Mammary epithelial cell (primary cell): ENCODE measurements at regions of chr16 and their contacts with region 1.

Region 1: GRCh38 chr16:81885976-81886586 is 107.0 kb downstream of the PLCG2 start:
- DNase-seq: no peak
- H3K4me3 ChIP-seq: no peak overlapping the region
- H3K27ac ChIP-seq: no peak overlapping the region
- H3K4me1 ChIP-seq: no peaks in the 10 kb centered on the region
- H3K27me3 ChIP-seq: no peaks in the 10 kb centered on the region
- CTCF ChIP-seq: peak; percentile 60 to 83

Region 2: DNA sequence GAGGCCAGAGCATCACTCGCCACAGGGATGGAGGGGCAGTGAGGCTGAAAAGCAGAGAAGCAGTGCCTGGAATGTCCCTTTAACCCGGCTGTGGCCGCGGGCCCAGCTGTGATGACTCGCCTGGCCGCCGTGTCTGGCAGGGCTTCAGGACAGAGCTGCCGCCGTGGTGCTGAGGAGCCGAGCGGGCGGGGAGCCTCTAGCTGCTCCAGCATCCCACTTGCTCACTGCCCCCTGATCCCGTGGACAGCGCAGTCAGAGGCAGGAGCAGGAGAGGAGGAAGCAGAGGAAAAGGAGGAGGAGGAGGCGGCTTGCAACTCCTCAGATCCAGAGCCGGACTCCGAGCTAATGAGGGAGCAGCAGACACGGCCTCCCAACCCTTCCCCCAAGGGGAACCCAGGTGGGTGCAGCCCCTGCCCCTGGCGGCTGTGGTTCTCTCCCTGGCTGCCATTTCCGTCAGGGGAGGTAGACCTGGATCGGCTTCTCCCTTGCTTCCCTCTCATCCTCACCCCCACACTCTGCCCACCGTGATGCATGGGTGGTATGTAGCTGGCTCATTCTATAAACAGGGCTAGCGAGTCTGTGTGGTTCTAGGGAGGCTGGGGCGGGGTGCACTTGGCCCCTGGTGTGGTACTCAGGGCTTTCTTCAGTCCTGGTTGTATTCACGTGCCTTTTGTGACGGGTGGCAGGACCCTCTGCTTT is 275.8 kb before region 1 on chr16:
- CTCF ChIA-PET with region 1: no interaction called
- dilution Hi-C with region 1: no loop called
- in situ Hi-C with region 1: no loop called
- intact Hi-C with region 1: no loop called
- DNase-seq: peak; percentile 52
- H3K4me3 ChIP-seq: no peak overlapping the region
- H3K27ac ChIP-seq: no peak overlapping the region
- H3K4me1 ChIP-seq: peaks cover 35% of the 10 kb centered on the region
- H3K27me3 ChIP-seq: no peaks in the 10 kb centered on the region
- CTCF ChIP-seq: no peak

Region 3: DNA sequence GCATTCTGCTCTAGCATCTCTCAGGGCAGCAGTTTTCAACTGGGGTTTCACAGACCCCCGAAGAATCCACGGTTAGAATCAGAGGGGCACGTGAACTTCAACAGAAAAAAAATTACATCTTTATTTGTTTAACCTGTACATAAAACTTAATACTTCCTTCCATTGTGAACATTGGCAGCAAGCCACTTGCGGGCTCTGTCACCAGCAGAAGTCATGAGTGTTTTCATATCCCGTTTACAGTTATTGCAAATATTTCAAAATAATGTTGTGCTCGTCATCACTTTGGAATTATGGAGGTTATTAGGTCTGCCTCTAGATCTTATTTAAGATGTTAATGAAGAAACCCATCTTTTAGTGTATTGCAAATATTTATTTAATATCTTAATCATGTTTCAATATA is 15.4 kb after region 1 on chr16:
- CTCF ChIA-PET with region 1: no interaction called
- dilution Hi-C with region 1: no loop called
- in situ Hi-C with region 1: no loop called
- intact Hi-C with region 1: no loop called
- DNase-seq: no peak
- H3K4me3 ChIP-seq: no peak overlapping the region
- H3K27ac ChIP-seq: no peak overlapping the region
- H3K4me1 ChIP-seq: no peaks in the 10 kb centered on the region
- H3K27me3 ChIP-seq: no peaks in the 10 kb centered on the region
- CTCF ChIP-seq: no peak

Region 4: DNA sequence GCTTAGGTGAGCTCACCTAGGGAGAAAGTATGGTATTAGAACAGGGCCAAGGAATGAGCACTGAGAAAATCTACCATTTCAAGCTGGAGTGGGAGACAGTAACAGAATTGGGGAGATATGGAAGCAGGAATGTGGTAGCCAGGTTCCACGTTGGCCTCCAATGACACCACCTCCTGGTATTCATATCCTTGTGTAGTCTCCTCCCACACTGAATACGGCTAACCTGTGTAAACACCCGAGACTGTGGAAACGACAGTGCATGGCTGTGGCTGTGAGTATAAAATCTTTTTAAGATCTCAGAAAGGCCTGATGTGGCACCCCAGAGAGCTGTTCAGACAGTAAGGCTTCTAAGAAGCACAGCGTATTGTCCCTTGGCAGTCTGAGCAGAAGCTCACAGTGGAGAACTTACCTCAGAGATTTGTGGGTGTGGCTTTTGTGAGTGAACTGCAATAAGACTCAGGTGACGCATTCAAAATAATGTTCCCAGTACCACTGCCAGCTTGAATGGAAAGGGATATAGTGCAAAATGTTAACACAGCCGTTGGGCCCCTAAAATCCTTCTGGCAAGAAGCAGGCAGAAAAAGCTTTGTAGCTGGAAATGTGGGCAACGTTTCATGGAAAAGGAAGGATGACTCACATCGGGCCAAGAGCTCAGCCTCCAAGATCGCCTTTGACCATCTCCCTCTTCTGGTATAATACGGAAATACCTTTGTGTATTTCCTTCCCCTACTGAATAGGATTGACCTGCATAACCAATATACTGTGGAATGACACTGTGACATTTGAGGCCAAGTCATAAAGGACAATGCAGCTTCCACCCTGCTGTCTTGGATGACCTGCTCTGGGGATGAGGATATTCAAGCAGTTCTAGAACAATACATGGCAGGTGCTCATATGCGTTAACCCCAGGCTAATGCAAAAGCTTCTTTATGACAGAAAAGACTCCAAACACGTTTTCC is 110.9 kb after region 1 on chr16:
- CTCF ChIA-PET with region 1: no interaction called
- dilution Hi-C with region 1: no loop called
- in situ Hi-C with region 1: no loop called
- intact Hi-C with region 1: loop called (anchors 1 kb)
- DNase-seq: peak; percentile 38
- H3K4me3 ChIP-seq: no peak overlapping the region
- H3K27ac ChIP-seq: peak overlapping the region; percentile 48
- H3K4me1 ChIP-seq: peaks cover 21% of the 10 kb centered on the region
- H3K27me3 ChIP-seq: no peaks in the 10 kb centered on the region
- CTCF ChIP-seq: peak; percentile 38 to 50

Region 5: GRCh38 chr16:82229796-82230619 is 343.9 kb after region 1 on chr16:
- CTCF ChIA-PET with region 1: no interaction called
- dilution Hi-C with region 1: no loop called
- in situ Hi-C with region 1: no loop called
- intact Hi-C with region 1: loop called (anchors 1 kb)
- DNase-seq: peak; percentile 60
- H3K4me3 ChIP-seq: no peak overlapping the region
- H3K27ac ChIP-seq: no peak overlapping the region
- H3K4me1 ChIP-seq: peaks cover 14% of the 10 kb centered on the region
- H3K27me3 ChIP-seq: no peaks in the 10 kb centered on the region
- CTCF ChIP-seq: peak; percentile 90 to 96

Region 6: DNA sequence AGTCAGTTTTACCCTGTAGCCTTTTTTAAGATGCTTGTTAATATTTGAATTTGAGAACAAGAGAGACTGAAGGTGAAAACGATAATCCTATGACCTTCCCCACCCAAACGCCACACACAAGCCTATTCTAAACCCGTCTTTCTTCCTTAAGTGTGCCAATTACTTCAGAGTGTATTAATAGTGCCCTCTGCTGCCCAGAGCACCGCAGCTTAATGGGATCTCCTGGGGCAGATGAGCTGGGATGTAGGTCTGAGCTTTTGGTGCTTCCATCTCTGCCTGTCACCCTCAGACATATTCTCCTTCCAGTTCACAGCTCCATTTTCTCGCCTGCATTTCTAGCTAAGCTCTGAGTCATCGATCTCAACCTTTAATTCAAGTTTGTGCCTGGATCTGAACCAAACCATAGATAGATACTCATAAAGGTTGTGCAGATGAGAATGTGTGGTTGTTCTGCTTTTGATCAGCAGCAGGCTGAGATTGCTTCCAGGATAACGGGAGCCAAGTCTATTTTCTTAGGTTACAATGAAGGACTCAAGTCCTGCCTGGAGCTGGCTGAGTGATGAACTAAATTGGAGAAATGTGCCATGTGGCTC is 694.3 kb after region 1 on chr16:
- CTCF ChIA-PET with region 1: no interaction called
- dilution Hi-C with region 1: no loop called
- in situ Hi-C with region 1: no loop called
- intact Hi-C with region 1: loop called (anchors 1 kb)
- DNase-seq: peak; percentile 8
- H3K4me3 ChIP-seq: no peak overlapping the region
- H3K27ac ChIP-seq: no peak overlapping the region
- H3K4me1 ChIP-seq: no peaks in the 10 kb centered on the region
- H3K27me3 ChIP-seq: no peaks in the 10 kb centered on the region
- CTCF ChIP-seq: peak; percentile 51 to 54